ENCODE measurements at regions of chr13 and their contacts with region 1.

Region 1: DNA sequence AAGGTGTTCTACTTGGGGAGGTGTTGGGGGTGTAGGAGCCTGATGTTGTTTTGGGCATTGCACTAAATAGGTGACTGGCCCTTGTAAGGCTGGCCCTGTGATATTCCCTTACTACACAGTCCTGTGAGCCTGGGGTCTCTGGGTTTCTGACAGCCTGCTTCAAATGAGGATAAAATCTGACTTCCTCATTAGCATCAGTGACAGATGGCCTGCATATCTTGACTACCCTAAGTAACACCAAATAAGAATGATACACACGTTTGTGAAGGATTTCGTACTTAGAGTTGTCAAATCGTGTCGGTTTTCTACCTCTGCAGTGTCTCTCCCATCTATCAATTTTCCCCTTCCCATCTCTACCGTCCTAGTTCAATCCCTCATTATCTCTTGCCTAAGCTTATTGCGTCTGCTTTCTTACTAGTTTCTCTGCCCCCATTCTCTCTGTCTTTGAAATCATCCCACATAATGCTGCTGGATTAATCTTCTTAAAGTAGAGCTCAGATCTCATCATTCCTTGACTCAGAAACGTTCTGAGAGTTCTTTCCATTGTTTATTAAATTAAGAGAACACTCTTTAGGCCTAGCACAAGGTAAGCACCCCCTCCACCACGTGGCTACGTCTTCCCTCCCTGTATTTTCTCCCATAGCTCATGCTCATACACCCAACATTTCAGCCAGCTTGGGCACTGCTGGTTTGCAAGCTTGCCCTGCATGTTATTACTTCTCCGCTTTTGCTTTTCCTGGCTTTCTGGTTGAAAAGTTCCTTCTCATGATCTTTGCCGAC is 26.2 kb upstream of the CNMD start:
- DNase-seq: no peak
- ATAC-seq: no peak
- H3K4me3 ChIP-seq: no peak overlapping the region
- H3K27ac ChIP-seq: no peak overlapping the region
- H3K4me1 ChIP-seq: no peaks in the 10 kb centered on the region
- H3K27me3 ChIP-seq: peaks cover 0 to 20% (median 6%) of the 10 kb centered on the region in 7 donors
- CTCF ChIP-seq: no peak

Region 2: GRCh38 chr13:52779103-52779502 is 13.3 kb after region 1 on chr13:
- intact Hi-C with region 1: loop called in 1 of 10 experiments (anchors 1 kb)
- DNase-seq: no peak
- ATAC-seq: no peak
- H3K4me3 ChIP-seq: no peak overlapping the region
- H3K27ac ChIP-seq: no peak overlapping the region
- H3K4me1 ChIP-seq: no peaks in the 10 kb centered on the region
- H3K27me3 ChIP-seq: peaks cover 0 to 36% (median 15%) of the 10 kb centered on the region in 7 donors
- CTCF ChIP-seq: no peak